ENCODE measurements at regions of chr12 and their contacts with region 1.

Region 1: GRCh38 chr12:104877123-104877705 is 80.9 kb downstream of the SLC41A2 start:
- DNase-seq: peak; percentile 22 to 74 (median 49)
- ATAC-seq: peak; percentile 63 to 80
- H3K4me3 ChIP-seq: no peak overlapping the region
- H3K27ac ChIP-seq: no peak overlapping the region
- H3K4me1 ChIP-seq: no peaks in the 10 kb centered on the region
- H3K27me3 ChIP-seq: no peaks in the 10 kb centered on the region

Region 2: GRCh38 chr12:104381731-104382480 is 495.3 kb before region 1 on chr12:
- intact Hi-C with region 1: loop called (anchors 2 to 5 kb)
- DNase-seq: peak; percentile 71 to 89 (median 86)
- ATAC-seq: peak; percentile 81 to 88
- H3K4me3 ChIP-seq: no peak overlapping the region
- H3K27ac ChIP-seq: no peak overlapping the region
- H3K4me1 ChIP-seq: peaks cover 3% of the 10 kb centered on the region
- H3K27me3 ChIP-seq: no peaks in the 10 kb centered on the region

Region 3: GRCh38 chr12:104671407-104672098 is 205.7 kb before region 1 on chr12:
- intact Hi-C with region 1: loop called in 1 of 4 experiments (anchors 10 kb)
- DNase-seq: peak; percentile 87 to 91 (median 90)
- ATAC-seq: peak; percentile 32 to 67
- H3K4me3 ChIP-seq: no peak overlapping the region
- H3K27ac ChIP-seq: peak overlapping the region; percentile 88
- H3K4me1 ChIP-seq: peaks cover 32% of the 10 kb centered on the region
- H3K27me3 ChIP-seq: no peaks in the 10 kb centered on the region

Region 4: GRCh38 chr12:104809706-104810385 is 67.4 kb before region 1 on chr12:
- intact Hi-C with region 1: no loop called
- DNase-seq: no peak
- ATAC-seq: no peak
- H3K4me3 ChIP-seq: no peak overlapping the region
- H3K27ac ChIP-seq: no peak overlapping the region
- H3K4me1 ChIP-seq: no peaks in the 10 kb centered on the region
- H3K27me3 ChIP-seq: no peaks in the 10 kb centered on the region